ENCODE measurements at regions of chr12 and their contacts with region 1.

Region 1: GRCh38 chr12:57899010-57899662 is 42.2 kb upstream of the ATP23 start:
- DNase-seq: peak; percentile 69 to 74
- H3K4me3 ChIP-seq: no peak overlapping the region
- H3K27ac ChIP-seq: peak overlapping the region; percentile 98 to 100
- H3K4me1 ChIP-seq: peaks cover 26 to 36% of the 10 kb centered on the region in 2 donors
- H3K27me3 ChIP-seq: no peaks in the 10 kb centered on the region
- CTCF ChIP-seq: no peak
- POLR2A ChIP-seq: no peak

Region 2: GRCh38 chr12:57844709-57845477 is 54.2 kb before region 1 on chr12:
- intact Hi-C with region 1: loop called (anchors 5 kb)
- DNase-seq: peak; percentile 84 to 86
- H3K4me3 ChIP-seq: peak overlapping the region; percentile 77 to 98
- H3K27ac ChIP-seq: peak overlapping the region; percentile 96 to 100
- H3K4me1 ChIP-seq: peaks cover 5 to 21% of the 10 kb centered on the region in 2 donors
- H3K27me3 ChIP-seq: no peaks in the 10 kb centered on the region
- CTCF ChIP-seq: no peak
- POLR2A ChIP-seq: peak in 1 of 2 donors; percentile 40

Region 3: GRCh38 chr12:57874166-57875108 is 24.7 kb before region 1 on chr12:
- intact Hi-C with region 1: no loop called
- DNase-seq: no peak
- H3K4me3 ChIP-seq: no peak overlapping the region
- H3K27ac ChIP-seq: peak overlapping the region; percentile 76 to 84
- H3K4me1 ChIP-seq: no peaks in the 10 kb centered on the region
- H3K27me3 ChIP-seq: no peaks in the 10 kb centered on the region
- CTCF ChIP-seq: no peak
- POLR2A ChIP-seq: no peak

Measured in uterus (tissue), 4 donors.